H1 (cell line): ENCODE measurements at regions of chr22 and their contacts with region 1.

Region 1: DNA sequence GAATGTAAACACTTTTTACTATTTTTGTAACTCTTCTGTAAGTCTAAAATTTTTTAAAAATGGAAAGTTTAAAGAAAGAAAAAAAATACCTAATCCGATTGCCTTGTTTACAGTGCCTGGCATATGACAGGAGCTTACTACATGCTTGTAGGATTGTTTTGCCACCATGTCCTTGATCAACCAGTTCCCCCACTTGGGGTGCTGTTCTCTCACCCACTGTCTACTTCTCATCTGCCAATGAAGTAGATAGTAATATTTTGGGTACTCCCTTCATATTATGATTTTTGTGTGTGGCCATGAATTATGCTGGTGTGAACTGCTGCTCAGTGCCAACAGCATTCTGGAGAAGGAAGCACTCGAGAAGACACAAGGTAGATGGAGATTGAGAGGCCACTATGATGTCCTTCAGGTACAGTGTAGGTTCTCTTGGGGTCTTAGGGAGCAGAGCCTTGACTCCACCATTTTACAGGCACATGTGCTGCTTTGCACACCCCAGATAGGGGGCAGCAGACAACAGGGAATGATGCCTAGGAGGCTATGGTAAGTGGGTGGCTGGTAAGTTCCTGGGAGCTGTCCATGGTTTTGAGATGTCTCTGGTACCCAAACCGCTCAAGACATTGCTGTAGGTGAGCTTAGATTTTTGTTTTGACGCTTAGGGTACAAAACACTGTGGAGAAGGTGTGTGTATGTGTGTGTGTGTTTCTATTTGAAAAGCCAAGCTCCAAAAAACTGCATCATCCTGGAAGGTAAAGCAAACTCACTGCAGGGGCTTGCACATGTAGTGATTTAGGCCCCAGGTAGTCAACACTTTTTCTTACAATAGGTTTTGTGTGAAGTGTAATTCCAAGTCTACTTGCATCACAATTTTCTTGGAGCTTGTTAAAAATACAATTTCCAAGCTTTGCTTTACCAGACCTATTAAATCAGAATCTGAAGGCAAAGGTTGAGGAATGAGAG is 494.5 kb upstream of the LARGE1 start:
- DNase-seq: peak; percentile 68 to 77
- H3K4me3 ChIP-seq: no peak overlapping the region
- H3K27ac ChIP-seq: no peak overlapping the region
- H3K4me1 ChIP-seq: no peaks in the 10 kb centered on the region
- H3K27me3 ChIP-seq: no peaks in the 10 kb centered on the region
- CTCF ChIP-seq: peak; percentile 94 to 98 (median 96)
- EP300 ChIP-seq: no peak
- POLR2A ChIP-seq: no peak
- RAD21 ChIP-seq: peak; percentile 100

Region 2: DNA sequence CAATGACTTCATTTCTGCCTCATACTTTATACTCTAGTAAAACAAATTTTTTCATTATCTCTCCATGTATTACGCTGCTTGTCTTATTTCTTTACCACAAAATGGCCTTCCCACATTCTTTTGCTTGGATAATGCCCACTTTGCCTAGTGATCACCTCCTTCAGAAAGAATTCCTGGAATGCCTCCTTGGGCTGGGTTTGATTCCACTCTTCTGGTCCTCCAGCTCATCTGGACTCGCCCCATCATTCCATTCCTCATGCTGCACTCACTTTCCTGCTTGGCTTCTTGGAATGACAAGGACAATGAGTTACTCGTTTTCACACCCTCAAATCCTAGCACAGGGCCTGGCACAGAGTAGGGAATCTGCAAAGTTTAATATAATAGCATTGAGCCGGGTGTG is 19.4 kb before region 1 on chr22:
- CTCF ChIA-PET with region 1: interaction called, 14 read pairs
- POLR2A ChIA-PET with region 1: no interaction called
- DNase-seq: no peak
- H3K4me3 ChIP-seq: no peak overlapping the region
- H3K27ac ChIP-seq: no peak overlapping the region
- H3K4me1 ChIP-seq: no peaks in the 10 kb centered on the region
- H3K27me3 ChIP-seq: no peaks in the 10 kb centered on the region
- CTCF ChIP-seq: no peak
- EP300 ChIP-seq: no peak
- POLR2A ChIP-seq: no peak
- RAD21 ChIP-seq: no peak

Region 3: GRCh38 chr22:34429314-34429713 is 14.6 kb after region 1 on chr22:
- CTCF ChIA-PET with region 1: interaction called, 15 read pairs
- POLR2A ChIA-PET with region 1: no interaction called
- DNase-seq: no peak
- H3K4me3 ChIP-seq: no peak overlapping the region
- H3K27ac ChIP-seq: no peak overlapping the region
- H3K4me1 ChIP-seq: no peaks in the 10 kb centered on the region
- H3K27me3 ChIP-seq: no peaks in the 10 kb centered on the region
- CTCF ChIP-seq: no peak
- EP300 ChIP-seq: no peak
- POLR2A ChIP-seq: no peak
- RAD21 ChIP-seq: no peak

Region 4: DNA sequence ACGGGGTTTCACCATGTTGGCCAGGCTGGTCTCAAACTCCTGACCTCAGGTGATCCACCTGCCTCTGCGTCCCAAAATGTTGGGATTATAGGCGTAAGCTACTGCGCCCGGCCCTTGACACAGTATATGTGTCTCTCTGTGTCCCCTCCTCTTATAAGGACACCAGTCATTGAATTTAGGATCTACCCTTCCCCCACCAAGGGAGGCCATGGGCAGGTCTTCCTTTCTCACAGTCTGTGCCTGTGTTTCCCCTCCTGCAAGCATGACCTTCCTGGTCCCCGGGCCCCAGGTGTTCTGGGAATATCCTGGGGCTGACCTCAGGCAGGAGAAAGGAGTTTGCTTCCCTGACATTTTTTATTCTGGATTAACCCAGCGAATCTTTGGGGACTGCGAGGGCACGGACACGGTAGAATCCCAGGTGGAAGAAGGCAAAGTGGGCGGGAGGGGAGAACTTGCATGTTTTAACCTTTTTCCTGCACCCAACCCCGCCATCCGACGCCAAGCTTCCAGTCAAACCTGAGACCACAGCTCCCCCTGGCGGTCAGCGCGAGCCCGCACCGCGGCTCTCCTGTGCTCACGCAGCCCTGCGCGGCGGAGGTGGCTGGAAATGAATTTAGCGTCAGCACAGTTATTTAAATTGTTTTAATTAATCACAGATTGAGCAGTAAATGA is 609.1 kb after region 1 on chr22:
- CTCF ChIA-PET with region 1: interaction called, 39 read pairs
- POLR2A ChIA-PET with region 1: interaction called, 3 read pairs
- DNase-seq: peak; percentile 63 to 99
- H3K4me3 ChIP-seq: peak overlapping the region in 2 of 4 experiments; percentile 29 to 38; a peak in 2 of 8 replicates
- H3K27ac ChIP-seq: no peak overlapping the region
- H3K4me1 ChIP-seq: no peaks in the 10 kb centered on the region; a peak in 2 of 7 replicates
- H3K27me3 ChIP-seq: peaks cover 0 to 4% (median 2%) of the 10 kb centered on the region in 4 experiments; a peak in 1 of 7 replicates
- CTCF ChIP-seq: peak; percentile 92 to 93 (median 93)
- EP300 ChIP-seq: no peak
- POLR2A ChIP-seq: no peak
- RAD21 ChIP-seq: peak; percentile 97 to 99

Region 5: GRCh38 chr22:35037089-35037488 is 622.3 kb after region 1 on chr22:
- CTCF ChIA-PET with region 1: interaction called, 11 read pairs
- POLR2A ChIA-PET with region 1: no interaction called
- DNase-seq: peak in 1 of 2 experiments; percentile 64
- H3K4me3 ChIP-seq: no peak overlapping the region
- H3K27ac ChIP-seq: no peak overlapping the region
- H3K4me1 ChIP-seq: no peaks in the 10 kb centered on the region; a peak in 1 of 7 replicates
- H3K27me3 ChIP-seq: no peaks in the 10 kb centered on the region
- CTCF ChIP-seq: peak; percentile 45 to 87 (median 77)
- EP300 ChIP-seq: no peak
- POLR2A ChIP-seq: no peak
- RAD21 ChIP-seq: peak; percentile 85 to 90

Region 6: DNA sequence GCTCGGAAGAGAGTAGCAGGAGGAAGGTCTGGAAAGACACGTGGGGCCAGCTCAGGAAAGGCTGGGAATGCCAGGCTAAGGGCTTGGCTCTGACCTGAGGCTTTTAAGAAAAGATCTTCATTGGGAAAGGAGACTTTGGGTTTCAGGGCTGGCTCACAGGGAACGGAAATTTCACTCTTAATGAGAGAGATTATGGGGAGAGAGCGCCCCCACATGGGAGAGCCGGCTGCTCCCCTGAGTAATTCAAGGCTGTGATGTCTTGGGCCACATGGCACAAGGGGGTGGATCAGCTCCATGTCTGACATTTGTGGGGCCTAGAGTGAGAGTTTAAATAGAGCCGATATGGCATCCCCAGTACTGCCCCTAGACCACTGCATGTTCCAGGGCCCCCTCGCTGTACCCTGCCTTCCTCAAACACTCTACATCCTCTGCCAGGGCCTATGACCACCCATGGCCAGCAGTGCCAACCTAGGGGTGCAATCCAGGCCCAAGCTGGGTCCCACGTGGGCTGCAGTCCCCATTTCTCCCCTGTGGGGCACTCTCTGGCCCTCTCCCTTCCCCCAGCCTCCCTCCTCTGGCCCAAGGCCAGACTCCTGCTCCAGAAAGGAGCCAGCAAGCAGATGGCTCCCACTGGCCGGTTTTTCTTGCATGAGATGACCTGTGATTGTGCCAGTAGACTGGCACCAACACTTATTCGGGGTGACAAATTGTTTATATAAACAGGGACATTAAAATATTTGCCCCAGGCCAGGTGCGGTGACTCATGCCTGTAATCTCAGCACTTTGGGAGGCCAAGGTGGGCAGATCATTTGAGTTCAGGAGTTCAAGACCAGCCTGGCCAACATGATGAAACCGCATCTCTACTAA is 726.4 kb after region 1 on chr22:
- CTCF ChIA-PET with region 1: interaction called, 13 read pairs
- POLR2A ChIA-PET with region 1: no interaction called
- DNase-seq: peak; percentile 51 to 88
- H3K4me3 ChIP-seq: no peak overlapping the region
- H3K27ac ChIP-seq: no peak overlapping the region
- H3K4me1 ChIP-seq: no peaks in the 10 kb centered on the region
- H3K27me3 ChIP-seq: no peaks in the 10 kb centered on the region
- CTCF ChIP-seq: peak; percentile 75 to 81 (median 76)
- EP300 ChIP-seq: no peak
- POLR2A ChIP-seq: no peak
- RAD21 ChIP-seq: peak; percentile 88 to 92